Dendritic cell treated with granulocyte-macrophage colony-stimulating factor and Interleukin-4, amounts not matched to agents 40 ng/mL and 50 ng/mL, for 4 days (primary cell): ENCODE measurements at regions of chr1 and their contacts with region 1.

Region 1: DNA sequence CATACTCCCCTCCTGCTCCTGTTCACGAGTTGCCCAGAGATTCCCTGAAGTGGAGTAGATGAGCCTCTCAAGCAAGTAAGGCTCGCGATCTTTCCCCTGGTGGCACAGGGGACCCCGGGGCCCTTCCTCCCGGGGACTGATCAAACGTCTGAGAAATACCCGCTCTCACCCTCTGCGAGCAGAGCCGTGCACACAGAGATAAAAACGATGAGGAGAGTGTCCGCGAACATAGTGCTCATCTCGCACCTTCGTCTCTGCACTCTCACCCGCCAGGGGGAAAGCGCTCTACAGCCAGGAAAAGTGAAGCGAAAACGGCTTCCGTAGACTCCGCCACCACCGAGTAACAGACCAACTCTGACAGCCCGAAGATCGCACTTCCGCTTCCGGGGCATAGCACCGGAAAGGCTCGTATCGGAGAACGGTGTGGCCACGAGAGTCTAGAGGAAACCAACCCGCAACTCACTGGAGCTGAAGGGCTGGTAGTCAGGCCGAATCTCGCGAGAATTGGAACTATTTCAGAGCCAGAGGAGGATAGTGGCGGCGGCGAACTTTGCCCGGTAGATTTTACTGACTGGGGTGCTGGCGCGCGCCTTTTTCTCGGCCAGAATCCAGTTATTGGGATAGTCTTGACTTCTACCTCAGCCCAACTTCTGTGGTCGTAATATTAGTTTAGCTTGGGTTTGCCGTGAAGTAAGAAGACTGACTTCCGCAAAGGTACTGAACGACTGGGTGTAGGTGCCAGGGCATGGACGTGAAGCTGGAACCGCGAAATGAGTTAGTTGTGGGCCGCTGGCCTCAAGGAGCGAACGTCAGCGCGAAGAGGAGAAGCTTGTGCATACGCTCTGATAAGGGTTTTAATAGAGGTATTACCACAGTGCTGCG is at the start of gene TMCO1:
- H3K4me3 Mint-ChIP-seq: peak within 1 kb of the TSS; percentile 97
- H3K27ac Mint-ChIP-seq: peak within 1 kb of the TSS; percentile 98
- H3K4me1 Mint-ChIP-seq: peaks cover 51% of the 10 kb centered on the region
- H3K27me3 Mint-ChIP-seq: no peaks in the 10 kb centered on the region

Region 2: DNA sequence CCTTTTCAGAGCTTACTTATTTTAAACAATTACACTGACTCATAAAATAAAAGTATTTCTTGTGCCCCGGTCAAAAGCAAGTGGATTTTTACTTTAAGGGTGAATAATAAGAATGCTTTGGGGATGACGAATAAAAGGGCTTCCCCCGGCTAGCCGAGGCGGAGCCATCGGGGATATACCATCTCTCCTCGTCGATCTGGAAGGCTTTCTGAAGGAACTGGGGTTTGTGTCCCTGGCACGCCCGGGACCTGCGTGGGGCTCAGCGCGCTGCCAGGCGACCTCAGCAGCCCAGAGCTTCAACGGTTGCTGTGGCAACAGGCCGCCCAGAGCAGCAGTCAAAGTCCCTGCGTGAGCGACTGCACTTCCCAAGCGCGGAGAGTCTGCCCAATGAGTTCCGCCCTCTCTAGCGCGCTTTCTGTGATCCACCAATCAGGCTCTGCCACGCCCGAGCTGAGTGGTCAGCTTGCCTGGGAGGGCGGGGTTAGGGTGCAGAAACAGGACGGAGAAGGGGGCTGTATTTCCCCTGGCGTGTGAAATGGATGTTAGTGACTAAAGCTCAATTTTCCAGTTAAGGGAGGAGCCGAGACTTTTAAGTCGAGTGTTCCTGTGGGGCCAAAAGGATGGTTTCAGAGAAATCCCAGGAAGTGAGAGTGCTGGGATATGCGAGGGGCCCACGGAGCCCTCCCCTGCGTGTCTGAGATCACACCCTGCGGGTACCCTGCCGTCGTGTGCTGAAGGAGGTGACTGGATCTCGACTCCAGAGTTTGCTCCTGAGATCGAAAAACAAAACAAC is 170.7 kb before region 1 on chr1:
- intact Hi-C with region 1: loop called (anchors 2 kb)
- H3K4me3 Mint-ChIP-seq: peak overlapping the region; percentile 82
- H3K27ac Mint-ChIP-seq: peak overlapping the region; percentile 76
- H3K4me1 Mint-ChIP-seq: peaks cover 47% of the 10 kb centered on the region
- H3K27me3 Mint-ChIP-seq: peaks cover 47% of the 10 kb centered on the region

Region 3: GRCh38 chr1:165630629-165631341 is 138.0 kb before region 1 on chr1 and contains the start of gene MGST3:
- intact Hi-C with region 1: loop called (anchors 2 kb)
- H3K4me3 Mint-ChIP-seq: no peak within 1 kb of the TSS
- H3K27ac Mint-ChIP-seq: no peak within 1 kb of the TSS
- H3K4me1 Mint-ChIP-seq: peaks cover 22% of the 10 kb centered on the region
- H3K27me3 Mint-ChIP-seq: no peaks in the 10 kb centered on the region

Region 4: DNA sequence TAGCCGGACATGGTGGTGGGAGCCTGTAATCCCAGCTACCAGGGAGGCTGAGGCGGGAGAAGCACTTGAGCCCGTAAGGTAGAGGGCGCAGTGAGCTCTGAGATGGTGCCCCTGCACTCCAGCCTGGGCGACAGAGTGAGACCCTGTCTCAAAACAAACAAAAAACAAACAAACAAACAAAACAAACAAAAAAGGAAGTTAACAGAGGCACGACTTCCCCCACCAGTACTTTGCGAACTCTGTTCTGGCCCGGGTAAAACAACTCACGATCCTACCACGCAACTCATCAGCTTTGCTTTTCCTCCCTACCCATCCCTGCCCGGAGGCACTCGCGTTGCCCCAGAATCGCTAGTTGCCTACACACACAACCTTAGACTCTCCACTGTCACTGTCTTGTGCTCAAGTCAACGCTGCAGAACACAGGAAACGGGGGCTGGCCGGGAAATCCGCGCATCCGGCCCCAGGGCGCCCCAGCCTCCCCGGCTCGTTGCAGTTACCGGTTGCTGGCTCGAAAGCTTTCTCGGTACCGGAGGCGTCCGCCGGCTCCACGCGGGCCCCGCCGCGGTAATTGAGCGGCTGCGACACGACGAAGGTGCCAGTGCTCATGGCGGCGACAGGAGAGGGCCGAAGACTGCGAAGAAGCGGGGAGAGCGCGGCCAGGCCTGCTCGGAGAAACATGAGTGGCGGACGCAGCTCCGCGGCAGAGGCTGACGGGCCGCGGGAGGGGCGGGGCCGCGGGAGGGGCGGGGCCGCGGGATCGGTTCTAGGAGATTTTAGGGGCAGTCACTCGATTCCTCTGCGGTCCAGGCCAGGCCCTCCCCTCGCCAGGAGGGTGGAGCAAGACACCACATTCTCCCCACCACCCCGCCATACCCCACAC is 70.6 kb before region 1 on chr1 and contains the start of gene ALDH9A1:
- intact Hi-C with region 1: loop called (anchors 1 kb)
- H3K4me3 Mint-ChIP-seq: peak within 1 kb of the TSS; percentile 95
- H3K27ac Mint-ChIP-seq: peak within 1 kb of the TSS; percentile 98
- H3K4me1 Mint-ChIP-seq: peaks cover 17% of the 10 kb centered on the region
- H3K27me3 Mint-ChIP-seq: no peaks in the 10 kb centered on the region

Region 5: DNA sequence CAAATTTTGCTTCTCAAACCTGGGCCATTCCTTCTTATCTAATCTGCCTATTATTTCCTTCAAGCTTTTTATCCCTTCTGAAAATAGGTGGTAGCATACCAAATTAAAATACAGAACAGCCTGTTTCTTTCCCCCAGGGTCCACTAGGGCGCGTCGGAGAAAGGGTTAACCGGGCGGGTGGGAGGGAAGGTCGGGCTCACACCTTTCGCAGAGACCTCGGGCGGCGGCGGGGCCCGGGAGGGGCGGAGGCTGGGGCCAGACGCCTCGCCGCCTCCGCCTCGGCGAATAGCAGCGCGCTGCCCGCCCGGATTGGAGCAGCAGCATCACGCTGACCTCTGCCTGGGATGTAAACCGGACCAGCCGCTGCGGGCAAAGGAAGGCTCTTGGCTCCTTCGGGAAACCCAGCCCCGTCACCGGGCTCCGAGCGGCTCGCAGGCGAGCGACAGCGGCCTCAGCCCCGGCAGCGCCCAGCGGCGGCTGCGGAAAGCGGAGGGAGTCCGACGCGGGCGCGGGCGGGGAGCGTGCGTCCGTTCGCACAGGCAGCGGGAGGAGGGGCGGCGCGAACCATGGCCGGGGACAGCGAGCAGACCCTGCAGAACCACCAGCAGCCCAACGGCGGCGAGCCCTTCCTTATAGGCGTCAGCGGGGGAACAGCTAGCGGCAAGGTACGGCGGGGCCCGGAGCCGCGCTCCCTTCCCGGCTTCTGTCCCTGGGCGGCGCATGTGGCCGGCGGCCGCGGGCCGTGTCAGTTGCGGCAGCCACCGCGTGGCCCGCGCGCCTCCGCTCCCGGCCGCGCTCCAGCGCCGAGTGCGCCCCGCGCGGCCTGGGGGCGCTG is 58.7 kb after region 1 on chr1 and contains the start of gene UCK2:
- intact Hi-C with region 1: loop called (anchors 2 kb)
- H3K4me3 Mint-ChIP-seq: peak within 1 kb of the TSS; percentile 99
- H3K27ac Mint-ChIP-seq: peak within 1 kb of the TSS; percentile 87
- H3K4me1 Mint-ChIP-seq: peaks cover 15% of the 10 kb centered on the region
- H3K27me3 Mint-ChIP-seq: no peaks in the 10 kb centered on the region

Region 6: GRCh38 chr1:165871311-165872067 is 102.7 kb after region 1 on chr1:
- intact Hi-C with region 1: loop called (anchors 2 kb)
- H3K4me3 Mint-ChIP-seq: peak overlapping the region; percentile 4
- H3K27ac Mint-ChIP-seq: peak overlapping the region; percentile 80
- H3K4me1 Mint-ChIP-seq: peaks cover 37% of the 10 kb centered on the region
- H3K27me3 Mint-ChIP-seq: no peaks in the 10 kb centered on the region

Region 7: DNA sequence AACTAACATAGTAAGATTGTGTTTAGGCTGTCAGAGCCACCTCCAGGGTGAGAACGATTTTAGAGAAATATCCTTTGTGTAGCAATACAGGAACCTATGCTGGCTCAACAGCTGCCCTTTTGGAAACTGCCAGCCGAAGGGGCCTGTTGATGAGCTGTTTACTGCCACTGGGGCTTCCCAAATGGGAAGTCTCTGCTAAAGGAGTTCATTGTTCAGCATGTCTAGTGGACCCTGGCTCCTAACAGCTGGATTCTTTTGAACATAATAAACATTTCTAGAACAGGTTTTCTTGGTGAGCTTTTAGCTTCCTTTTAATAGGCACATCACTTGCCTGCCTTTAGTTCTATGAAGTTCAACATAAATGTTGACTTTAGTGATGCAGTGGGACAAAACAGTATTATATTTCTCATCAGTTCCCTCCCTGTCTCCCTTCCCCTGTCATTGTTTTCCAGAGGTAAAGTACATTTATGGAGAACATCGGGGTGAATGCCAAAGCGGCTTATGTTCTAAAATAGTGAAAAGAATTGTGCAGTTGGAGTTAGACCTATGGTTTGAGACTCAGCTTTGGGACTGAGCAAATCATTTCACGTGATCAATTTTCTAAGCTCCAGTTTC is 116.0 kb after region 1 on chr1:
- intact Hi-C with region 1: no loop called
- H3K4me3 Mint-ChIP-seq: no peak overlapping the region
- H3K27ac Mint-ChIP-seq: peak overlapping the region; percentile 89
- H3K4me1 Mint-ChIP-seq: peaks cover 40% of the 10 kb centered on the region
- H3K27me3 Mint-ChIP-seq: no peaks in the 10 kb centered on the region

Region 8: GRCh38 chr1:165914136-165914798 is 145.5 kb after region 1 on chr1:
- intact Hi-C with region 1: loop called (anchors 2 kb)
- H3K4me3 Mint-ChIP-seq: no peak overlapping the region
- H3K27ac Mint-ChIP-seq: no peak overlapping the region
- H3K4me1 Mint-ChIP-seq: peaks cover 5% of the 10 kb centered on the region
- H3K27me3 Mint-ChIP-seq: no peaks in the 10 kb centered on the region